ENCODE measurements at regions of chr15 and their contacts with region 1.

Region 1: GRCh38 chr15:61518191-61518950 is 289.3 kb upstream of the RORA start:
- DNase-seq: no peak
- ATAC-seq: no peak
- H3K4me3 ChIP-seq: no peak overlapping the region
- H3K27ac ChIP-seq: no peak overlapping the region
- H3K4me1 ChIP-seq: no peaks in the 10 kb centered on the region; the same call in 1 of the 2 replicates
- H3K27me3 ChIP-seq: no peaks in the 10 kb centered on the region
- CTCF ChIP-seq: no peak

Region 2: DNA sequence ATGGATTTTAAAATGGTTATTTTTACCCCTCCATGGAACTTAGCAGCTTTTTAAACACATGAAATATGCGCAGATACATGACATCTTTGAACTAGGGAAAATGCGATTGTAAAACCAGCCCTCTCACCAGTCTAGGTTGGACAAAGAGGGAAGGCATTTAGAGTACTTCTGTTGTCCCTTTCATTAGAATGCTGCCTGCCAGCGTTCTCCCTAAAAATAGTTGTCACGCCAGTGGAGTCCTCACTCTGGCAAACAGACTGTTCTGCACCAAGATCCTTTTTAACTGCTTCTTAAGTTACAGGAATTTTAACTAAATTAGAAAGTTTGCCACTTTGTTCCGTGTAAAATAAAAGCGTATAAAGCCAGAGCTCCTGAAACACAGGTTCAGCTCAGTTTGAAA is 246.6 kb after region 1 on chr15:
- CTCF ChIA-PET with region 1: no interaction called
- POLR2A ChIA-PET with region 1: interaction called, 13 read pairs
- in situ Hi-C with region 1: no loop called
- intact Hi-C with region 1: no loop called
- DNase-seq: no peak
- ATAC-seq: no peak
- H3K4me3 ChIP-seq: no peak overlapping the region
- H3K27ac ChIP-seq: no peak overlapping the region
- H3K4me1 ChIP-seq: no peaks in the 10 kb centered on the region
- H3K27me3 ChIP-seq: no peaks in the 10 kb centered on the region
- CTCF ChIP-seq: no peak